ENCODE measurements at regions of chr3 and their contacts with region 1.

Region 1: GRCh38 chr3:36677331-36678007 is 86.9 kb downstream of the DCLK3 start:
- DNase-seq: peak; percentile 90
- ATAC-seq: peak; percentile 82
- H3K4me3 ChIP-seq: no peak overlapping the region
- H3K27ac ChIP-seq: peak overlapping the region; percentile 10; the same call in 1 of the 2 replicates
- H3K4me1 ChIP-seq: peaks cover 2% of the 10 kb centered on the region; the same call in 1 of the 2 replicates
- H3K27me3 ChIP-seq: no peaks in the 10 kb centered on the region
- CTCF ChIP-seq: no peak
- POLR2A ChIP-seq: no peak
- RAD21 ChIP-seq: no peak

Region 2: GRCh38 chr3:36650271-36650671 is 27.2 kb before region 1 on chr3:
- CTCF ChIA-PET with region 1: no interaction called
- POLR2A ChIA-PET with region 1: no interaction called
- dilution Hi-C with region 1: no loop called
- in situ Hi-C with region 1: no loop called
- intact Hi-C with region 1: loop called (anchors 1 kb)
- DNase-seq: peak; percentile 69
- ATAC-seq: peak; percentile 66
- H3K4me3 ChIP-seq: no peak overlapping the region
- H3K27ac ChIP-seq: no peak overlapping the region
- H3K4me1 ChIP-seq: peaks cover 20% of the 10 kb centered on the region
- H3K27me3 ChIP-seq: no peaks in the 10 kb centered on the region
- CTCF ChIP-seq: no peak
- POLR2A ChIP-seq: no peak
- RAD21 ChIP-seq: no peak

Region 3: GRCh38 chr3:36823806-36824205 is 146.3 kb after region 1 on chr3:
- CTCF ChIA-PET with region 1: no interaction called
- POLR2A ChIA-PET with region 1: no interaction called
- dilution Hi-C with region 1: no loop called
- in situ Hi-C with region 1: no loop called
- intact Hi-C with region 1: no loop called
- DNase-seq: no peak
- ATAC-seq: no peak
- H3K4me3 ChIP-seq: no peak overlapping the region
- H3K27ac ChIP-seq: no peak overlapping the region
- H3K4me1 ChIP-seq: no peaks in the 10 kb centered on the region
- H3K27me3 ChIP-seq: no peaks in the 10 kb centered on the region
- CTCF ChIP-seq: no peak
- POLR2A ChIP-seq: no peak
- RAD21 ChIP-seq: no peak

Region 4: GRCh38 chr3:37492977-37493471 is 815.6 kb after region 1 on chr3:
- CTCF ChIA-PET with region 1: no interaction called
- POLR2A ChIA-PET with region 1: no interaction called
- dilution Hi-C with region 1: no loop called
- in situ Hi-C with region 1: no loop called
- intact Hi-C with region 1: no loop called
- DNase-seq: no peak
- ATAC-seq: no peak
- H3K4me3 ChIP-seq: no peak overlapping the region
- H3K27ac ChIP-seq: no peak overlapping the region
- H3K4me1 ChIP-seq: no peaks in the 10 kb centered on the region
- H3K27me3 ChIP-seq: peaks cover 11% of the 10 kb centered on the region
- CTCF ChIP-seq: no peak
- POLR2A ChIP-seq: no peak
- RAD21 ChIP-seq: no peak

Region 5: GRCh38 chr3:37526511-37526910 is 849.0 kb after region 1 on chr3:
- CTCF ChIA-PET with region 1: no interaction called
- POLR2A ChIA-PET with region 1: no interaction called
- dilution Hi-C with region 1: no loop called
- in situ Hi-C with region 1: no loop called
- intact Hi-C with region 1: no loop called
- DNase-seq: peak; percentile 66
- ATAC-seq: peak; percentile 93
- H3K4me3 ChIP-seq: no peak overlapping the region
- H3K27ac ChIP-seq: no peak overlapping the region
- H3K4me1 ChIP-seq: peaks cover 2% of the 10 kb centered on the region; the same call in 1 of the 2 replicates
- H3K27me3 ChIP-seq: peaks cover 1% of the 10 kb centered on the region
- CTCF ChIP-seq: no peak
- POLR2A ChIP-seq: no peak
- RAD21 ChIP-seq: no peak